CD8-positive, alpha-beta T cell (primary cell): ENCODE measurements at regions of chr1 and their contacts with region 1.

Region 1: GRCh38 chr1:24201941-24202440 is 14.9 kb upstream of the IFNLR1 start:
- DNase-seq: peak; percentile 26 to 72 (median 59)
- ATAC-seq: no peak
- H3K4me3 ChIP-seq: no peak overlapping the region
- H3K4me3 Mint-ChIP-seq: no peak overlapping the region
- H3K27ac ChIP-seq: no peak overlapping the region
- H3K27ac Mint-ChIP-seq: no peak overlapping the region
- H3K4me1 ChIP-seq: peaks cover 4% of the 10 kb centered on the region
- H3K4me1 Mint-ChIP-seq: peaks cover 8% of the 10 kb centered on the region
- H3K27me3 ChIP-seq: no peaks in the 10 kb centered on the region
- H3K27me3 Mint-ChIP-seq: peaks cover 2% of the 10 kb centered on the region
- CTCF ChIP-seq: peak; percentile 80

Region 2: GRCh38 chr1:24133819-24134775 is 67.9 kb before region 1 on chr1:
- CTCF ChIA-PET with region 1: no interaction called
- POLR2A ChIA-PET with region 1: no interaction called
- intact Hi-C with region 1: no loop called
- DNase-seq: no peak
- ATAC-seq: no peak
- H3K4me3 ChIP-seq: no peak overlapping the region
- H3K4me3 Mint-ChIP-seq: no peak overlapping the region
- H3K27ac ChIP-seq: no peak overlapping the region
- H3K27ac Mint-ChIP-seq: no peak overlapping the region
- H3K4me1 ChIP-seq: no peaks in the 10 kb centered on the region
- H3K4me1 Mint-ChIP-seq: peaks cover 2% of the 10 kb centered on the region
- H3K27me3 ChIP-seq: no peaks in the 10 kb centered on the region
- H3K27me3 Mint-ChIP-seq: peaks cover 10% of the 10 kb centered on the region
- CTCF ChIP-seq: no peak

Region 3: DNA sequence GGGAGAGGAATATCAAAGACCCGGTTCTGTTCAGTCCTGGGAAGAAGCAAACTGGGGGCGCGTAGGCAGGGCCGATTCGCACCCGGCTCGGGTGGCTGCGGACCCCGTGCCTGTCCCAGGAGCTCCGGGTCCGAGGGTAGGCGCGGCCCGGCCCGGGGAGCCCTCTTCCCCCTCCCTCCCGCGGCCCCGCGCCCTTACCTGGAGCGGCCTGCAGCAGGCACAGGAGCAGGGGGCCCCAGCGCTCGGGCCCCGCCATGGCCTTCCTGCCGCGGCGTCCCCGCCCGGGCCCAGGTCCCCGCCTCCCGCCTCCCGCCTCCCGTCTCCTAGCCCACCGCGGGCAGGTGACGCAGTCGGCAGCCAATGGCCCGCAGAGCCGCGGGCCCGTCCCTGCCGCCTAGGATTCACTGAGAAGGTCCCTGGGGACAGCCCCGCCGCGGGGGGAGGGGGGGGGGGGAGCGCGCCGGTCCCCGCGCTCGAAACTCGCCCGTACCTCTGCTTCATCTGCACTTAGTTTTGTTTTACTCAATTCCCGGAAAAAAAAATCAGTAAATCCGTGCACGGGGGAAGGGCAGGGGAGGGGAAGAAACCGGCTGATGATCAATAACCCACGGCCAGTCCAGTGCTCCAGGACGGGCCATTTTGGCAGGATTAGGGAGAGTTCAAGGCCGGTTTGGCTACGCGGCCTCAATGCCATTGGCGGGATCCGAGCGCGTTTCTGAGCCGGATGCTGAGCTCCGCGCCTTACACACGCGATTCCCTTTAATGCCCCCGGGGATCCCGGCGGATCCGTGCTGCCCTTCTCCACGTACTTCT is 14.8 kb before region 1 on chr1 and contains the start of gene IFNLR1:
- CTCF ChIA-PET with region 1: interaction called, 95 read pairs
- POLR2A ChIA-PET with region 1: interaction called, 9 read pairs
- intact Hi-C with region 1: loop called in 1 of 2 experiments (anchors 1 kb)
- DNase-seq: peak; percentile 22 to 91 (median 73)
- ATAC-seq: peak; percentile 85
- H3K4me3 ChIP-seq: peak within 1 kb of the TSS; percentile 51 to 81
- H3K4me3 Mint-ChIP-seq: peak within 1 kb of the TSS; percentile 85
- H3K27ac ChIP-seq: peak within 1 kb of the TSS; percentile 32 to 56
- H3K27ac Mint-ChIP-seq: peak within 1 kb of the TSS; percentile 80
- H3K4me1 ChIP-seq: peaks cover 29% of the 10 kb centered on the region
- H3K4me1 Mint-ChIP-seq: peaks cover 56% of the 10 kb centered on the region
- H3K27me3 ChIP-seq: no peaks in the 10 kb centered on the region
- H3K27me3 Mint-ChIP-seq: no peaks in the 10 kb centered on the region
- CTCF ChIP-seq: no peak
- total RNA-seq, gene IFNLR1: 4.1 to 5.6 TPM

Region 4: DNA sequence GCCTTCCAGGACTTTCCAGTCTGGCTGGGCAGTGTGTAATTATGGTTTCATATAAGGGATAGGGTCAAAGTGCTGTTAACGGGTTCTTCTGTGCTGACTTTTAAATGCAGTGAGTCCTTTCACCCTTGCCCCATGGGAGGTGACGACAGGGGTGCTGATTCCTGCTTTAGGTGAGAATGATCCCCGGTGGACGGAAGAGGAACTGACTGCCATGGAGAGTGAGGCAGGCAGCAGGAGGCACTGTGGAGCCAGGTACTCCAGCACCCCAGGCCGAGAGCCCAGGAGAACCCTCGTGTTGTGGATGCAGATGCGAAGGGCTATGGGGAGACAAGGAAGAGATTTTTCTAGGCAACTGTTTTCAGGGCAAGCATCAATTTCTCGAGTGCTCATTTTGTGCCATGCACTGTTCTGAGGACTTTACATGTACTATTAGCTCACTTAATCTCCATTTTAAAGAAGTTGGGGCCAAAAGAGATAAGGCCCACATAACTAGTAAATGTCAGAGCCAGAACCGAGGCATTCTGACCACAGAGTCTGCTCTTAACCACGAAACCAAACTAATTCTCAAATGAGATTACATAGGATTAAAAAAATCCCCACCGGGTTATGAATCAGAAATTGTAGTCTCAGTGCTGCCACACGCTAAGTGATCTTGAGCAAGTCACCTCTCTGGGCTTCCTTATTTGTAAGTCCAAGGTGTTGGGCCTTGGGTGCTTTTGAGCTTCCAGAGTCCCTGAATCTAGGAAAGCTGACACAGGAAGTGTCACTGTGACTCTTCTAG is 183.4 kb after region 1 on chr1:
- CTCF ChIA-PET with region 1: interaction called, 333 read pairs
- POLR2A ChIA-PET with region 1: no interaction called
- intact Hi-C with region 1: no loop called
- DNase-seq: peak in 4 of 9 experiments; percentile 32 to 53 (median 44)
- ATAC-seq: peak; percentile 74
- H3K4me3 ChIP-seq: no peak overlapping the region
- H3K4me3 Mint-ChIP-seq: no peak overlapping the region
- H3K27ac ChIP-seq: no peak overlapping the region
- H3K27ac Mint-ChIP-seq: no peak overlapping the region
- H3K4me1 ChIP-seq: no peaks in the 10 kb centered on the region
- H3K4me1 Mint-ChIP-seq: peaks cover 12% of the 10 kb centered on the region
- H3K27me3 ChIP-seq: no peaks in the 10 kb centered on the region
- H3K27me3 Mint-ChIP-seq: no peaks in the 10 kb centered on the region
- CTCF ChIP-seq: peak; percentile 75

Region 5: GRCh38 chr1:24635195-24635843 is 433.3 kb after region 1 on chr1:
- CTCF ChIA-PET with region 1: interaction called, 79 read pairs
- POLR2A ChIA-PET with region 1: no interaction called
- intact Hi-C with region 1: loop called (anchors 1 kb)
- DNase-seq: peak in 2 of 9 experiments; percentile 63 to 75
- ATAC-seq: peak; percentile 93
- H3K4me3 ChIP-seq: no peak overlapping the region
- H3K4me3 Mint-ChIP-seq: no peak overlapping the region
- H3K27ac ChIP-seq: no peak overlapping the region
- H3K27ac Mint-ChIP-seq: no peak overlapping the region
- H3K4me1 ChIP-seq: no peaks in the 10 kb centered on the region
- H3K4me1 Mint-ChIP-seq: peaks cover 2% of the 10 kb centered on the region
- H3K27me3 ChIP-seq: peaks cover 0 to 3% of the 10 kb centered on the region in 2 experiments
- H3K27me3 Mint-ChIP-seq: peaks cover 4% of the 10 kb centered on the region
- CTCF ChIP-seq: peak; percentile 57

Region 6: DNA sequence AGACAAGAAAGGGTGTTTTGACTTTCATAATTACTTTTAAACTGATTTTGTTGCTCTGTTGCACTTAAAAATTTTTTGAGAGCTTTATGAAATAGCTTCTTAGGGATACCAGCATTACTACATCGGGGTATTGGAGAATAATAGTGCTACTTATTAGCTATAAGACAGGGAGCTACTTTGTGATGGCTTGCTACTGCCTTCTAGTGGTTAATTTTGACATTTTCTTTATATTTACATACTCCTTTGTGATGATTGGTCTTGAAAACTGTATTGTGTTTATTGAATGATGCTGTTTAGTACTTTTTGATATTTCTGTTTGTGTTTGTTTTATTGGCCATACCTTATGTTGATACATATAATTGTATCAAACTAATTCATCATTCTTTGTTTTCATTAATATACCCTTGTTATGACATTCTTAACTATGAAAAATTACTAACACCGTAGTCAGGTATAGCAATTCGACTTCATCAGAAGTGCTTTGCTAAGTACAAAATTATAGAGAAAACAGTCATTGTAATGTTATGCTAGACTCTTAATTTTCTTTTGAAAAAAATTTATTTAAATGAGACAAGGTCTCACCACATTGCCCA is 628.8 kb after region 1 on chr1:
- CTCF ChIA-PET with region 1: interaction called, 12 read pairs
- POLR2A ChIA-PET with region 1: interaction called, 3 read pairs
- intact Hi-C with region 1: loop called (anchors 2 kb)
- DNase-seq: peak in 2 of 9 experiments; percentile 68 to 74
- ATAC-seq: peak; percentile 52
- H3K4me3 ChIP-seq: no peak overlapping the region
- H3K4me3 Mint-ChIP-seq: no peak overlapping the region
- H3K27ac ChIP-seq: no peak overlapping the region
- H3K27ac Mint-ChIP-seq: no peak overlapping the region
- H3K4me1 ChIP-seq: no peaks in the 10 kb centered on the region
- H3K4me1 Mint-ChIP-seq: no peaks in the 10 kb centered on the region
- H3K27me3 ChIP-seq: peaks cover 0 to 3% of the 10 kb centered on the region in 2 experiments
- H3K27me3 Mint-ChIP-seq: peaks cover 13% of the 10 kb centered on the region
- CTCF ChIP-seq: peak; percentile 95